Right cardiac atrium (tissue), 5 donors: ENCODE measurements at regions of chr1 and their contacts with region 1.

Region 1: GRCh38 chr1:45490626-45491486 is at the start of gene TESK2:
- DNase-seq: peak; percentile 95 to 99 (median 98)
- ATAC-seq: peak; percentile 98
- H3K4me3 ChIP-seq: peak within 1 kb of the TSS; percentile 67
- H3K27ac ChIP-seq: peak within 1 kb of the TSS; percentile 16
- H3K4me1 ChIP-seq: no peaks in the 10 kb centered on the region
- H3K27me3 ChIP-seq: no peaks in the 10 kb centered on the region
- total RNA-seq, gene TESK2: 1.6 to 4.7 (median 4.2) TPM

Region 2: GRCh38 chr1:44739361-44740178 is 751.3 kb before region 1 on chr1 and contains the start of gene KIF2C:
- intact Hi-C with region 1: loop called in 1 of 4 experiments (anchors 10 kb)
- DNase-seq: peak; percentile 98 to 99 (median 99)
- ATAC-seq: peak; percentile 99 to 100
- H3K4me3 ChIP-seq: peak within 1 kb of the TSS; percentile 89
- H3K27ac ChIP-seq: peak within 1 kb of the TSS; percentile 100
- H3K4me1 ChIP-seq: no peaks in the 10 kb centered on the region
- H3K27me3 ChIP-seq: no peaks in the 10 kb centered on the region
- total RNA-seq, gene KIF2C: 0.39 to 2.5 (median 1.6) TPM

Region 3: DNA sequence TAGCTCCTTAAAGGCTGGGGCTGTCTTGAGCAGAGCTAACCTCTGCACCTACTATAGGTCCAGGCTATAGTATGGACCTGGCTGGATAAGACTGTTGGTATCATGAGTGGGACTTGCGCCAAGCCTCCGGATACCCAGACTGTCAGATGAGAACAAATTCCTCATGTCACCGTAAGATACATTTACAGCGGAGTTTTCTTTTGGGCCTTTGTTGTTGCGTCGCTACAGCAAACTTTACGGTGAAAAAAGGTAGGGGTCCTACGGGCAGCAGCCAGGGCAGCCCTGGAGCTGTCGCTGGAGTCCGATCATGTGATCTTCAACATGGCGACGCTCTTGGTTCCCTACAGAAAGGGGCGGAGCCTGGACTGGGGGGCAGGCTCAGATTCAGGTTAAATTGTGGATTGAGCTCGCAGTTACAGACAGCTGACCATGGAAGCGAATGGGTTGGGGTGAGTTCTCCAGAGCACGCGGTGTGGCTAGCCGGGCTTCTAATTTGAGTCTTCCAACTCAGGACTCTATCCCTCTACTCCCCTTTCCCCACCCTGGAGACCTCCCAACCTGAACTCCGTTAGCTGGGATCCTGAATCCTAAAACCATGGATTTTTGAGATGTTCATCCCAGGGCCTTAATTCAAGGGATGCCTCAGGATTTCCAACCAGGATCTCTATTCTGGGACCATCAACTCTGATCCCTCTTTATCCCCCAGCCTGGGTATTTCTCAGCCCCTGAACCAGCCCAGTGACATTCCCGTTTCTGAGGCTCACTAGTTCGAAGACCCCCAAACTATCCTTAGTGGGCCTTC is 478.8 kb before region 1 on chr1 and contains the start of gene UROD:
- intact Hi-C with region 1: loop called in 2 of 4 experiments (anchors 5 kb)
- DNase-seq: peak; percentile 93 to 97 (median 95)
- ATAC-seq: peak; percentile 93
- H3K4me3 ChIP-seq: peak within 1 kb of the TSS; percentile 78
- H3K27ac ChIP-seq: peak within 1 kb of the TSS; percentile 91
- H3K4me1 ChIP-seq: peaks cover 9% of the 10 kb centered on the region
- H3K27me3 ChIP-seq: no peaks in the 10 kb centered on the region
- total RNA-seq, gene UROD: 71.9 to 87.6 (median 80.0) TPM

Region 4: DNA sequence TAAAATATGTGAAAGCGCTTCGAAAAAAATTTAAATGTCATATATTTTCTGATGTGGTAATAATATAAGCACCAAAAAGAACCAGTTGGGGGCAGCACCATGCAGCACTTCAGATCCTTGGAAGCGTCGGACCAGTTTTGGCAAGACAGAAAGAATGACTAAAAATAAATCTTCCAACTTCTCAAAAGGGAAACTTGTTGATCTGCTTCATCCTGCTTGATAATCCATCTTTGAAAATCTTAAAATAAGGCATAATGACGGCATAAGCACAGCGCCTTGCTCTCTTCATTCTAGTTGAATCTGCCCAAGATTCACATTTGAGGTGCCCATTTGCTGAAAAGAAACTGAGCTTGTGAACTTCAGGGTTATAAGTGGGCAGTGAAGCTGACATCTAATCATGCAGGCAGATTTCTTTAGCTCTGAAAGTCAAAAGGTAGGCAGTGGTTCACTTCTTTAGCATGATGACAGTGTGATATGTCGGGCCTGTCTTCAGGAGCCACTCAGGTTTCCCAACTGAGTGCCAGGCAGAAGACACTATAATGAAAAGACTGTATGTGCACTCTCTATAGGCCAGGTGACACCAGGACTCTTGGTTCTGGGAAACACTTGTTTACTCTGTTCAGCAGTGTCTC is 130.9 kb before region 1 on chr1:
- intact Hi-C with region 1: loop called (anchors 2 to 5 kb)
- DNase-seq: peak; percentile 63 to 84 (median 74)
- ATAC-seq: peak; percentile 76 to 82
- H3K4me3 ChIP-seq: no peak overlapping the region
- H3K27ac ChIP-seq: peak overlapping the region; percentile 80
- H3K4me1 ChIP-seq: peaks cover 1% of the 10 kb centered on the region
- H3K27me3 ChIP-seq: no peaks in the 10 kb centered on the region

Region 5: DNA sequence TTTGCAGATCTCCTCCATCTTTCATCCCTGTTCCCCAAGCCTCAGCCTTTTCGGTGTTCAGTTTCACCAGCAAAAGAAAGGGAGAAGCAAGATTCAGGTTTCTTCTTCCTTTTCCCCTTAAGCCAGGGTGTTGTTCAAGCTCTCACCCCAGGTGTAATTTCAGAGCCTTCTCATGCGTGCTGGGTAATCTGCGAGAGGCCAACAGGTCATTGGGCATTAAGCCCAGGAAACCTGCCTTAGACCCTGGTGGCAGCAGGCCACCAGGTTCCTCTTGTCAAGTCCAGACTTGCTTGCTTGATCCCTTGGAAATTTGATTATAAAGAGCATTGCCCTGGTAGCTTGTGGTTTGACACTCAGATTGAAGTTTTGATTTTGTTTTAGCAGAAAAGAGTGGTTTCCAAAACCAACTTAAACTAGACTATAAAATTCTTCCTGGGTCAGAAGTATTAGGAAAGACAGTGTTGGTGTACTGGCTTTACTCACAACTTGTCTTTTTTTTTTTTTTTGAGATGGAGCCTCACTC is 66.6 kb after region 1 on chr1:
- intact Hi-C with region 1: no loop called
- DNase-seq: no peak
- ATAC-seq: no peak
- H3K4me3 ChIP-seq: no peak overlapping the region
- H3K27ac ChIP-seq: no peak overlapping the region
- H3K4me1 ChIP-seq: no peaks in the 10 kb centered on the region
- H3K27me3 ChIP-seq: no peaks in the 10 kb centered on the region